Endothelial cell of umbilical vein (primary cell): ENCODE measurements at regions of chr19 and their contacts with region 1.

Region 1: DNA sequence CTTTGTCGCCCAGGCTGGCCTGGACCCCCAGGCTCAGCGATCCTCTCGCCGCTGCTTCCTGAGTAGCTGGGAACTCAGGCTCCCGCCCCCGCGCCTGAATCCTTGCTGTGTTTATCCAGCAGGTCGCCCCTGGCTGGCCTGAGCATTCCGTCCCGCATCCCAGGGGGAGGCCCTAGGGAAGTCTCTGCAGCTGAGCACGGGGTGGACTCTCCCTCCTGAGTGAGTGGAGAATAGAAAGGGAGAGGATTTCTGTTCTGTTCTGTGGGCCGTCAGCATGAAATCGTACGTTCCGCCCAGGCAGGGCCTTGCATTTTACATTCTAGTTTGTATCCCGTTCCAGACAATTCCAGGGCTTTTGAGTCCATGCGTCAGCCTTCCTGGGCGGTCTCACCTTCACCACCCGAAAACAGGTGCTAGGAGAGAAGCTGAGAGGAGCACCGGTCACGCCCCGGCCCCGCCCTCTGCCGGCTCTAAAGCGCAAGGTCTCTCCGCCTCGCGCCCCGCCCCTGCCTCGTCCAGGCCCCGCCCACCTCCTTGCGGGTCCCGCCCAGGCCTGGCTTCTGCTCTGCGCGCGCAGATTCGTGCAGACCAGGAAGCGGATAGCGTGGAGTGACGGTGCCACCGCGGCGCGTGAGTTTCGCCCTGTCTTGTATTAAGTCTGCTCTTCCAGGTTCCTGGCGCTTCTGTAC is at the start of gene ZNF761:
- DNase-seq: peak; percentile 96
- H3K4me3 ChIP-seq: peak within 1 kb of the TSS; percentile 74 to 98 (median 98)
- H3K27ac ChIP-seq: peak within 1 kb of the TSS; percentile 80
- H3K4me1 ChIP-seq: peaks cover 14% of the 10 kb centered on the region
- H3K27me3 ChIP-seq: no peaks in the 10 kb centered on the region
- CTCF ChIP-seq: peak in 1 of 2 donors; percentile 59
- POLR2A ChIP-seq: peak; percentile 83
- total RNA-seq, gene ZNF761: 7.3 and 8.8 TPM in 2 replicates

Region 2: DNA sequence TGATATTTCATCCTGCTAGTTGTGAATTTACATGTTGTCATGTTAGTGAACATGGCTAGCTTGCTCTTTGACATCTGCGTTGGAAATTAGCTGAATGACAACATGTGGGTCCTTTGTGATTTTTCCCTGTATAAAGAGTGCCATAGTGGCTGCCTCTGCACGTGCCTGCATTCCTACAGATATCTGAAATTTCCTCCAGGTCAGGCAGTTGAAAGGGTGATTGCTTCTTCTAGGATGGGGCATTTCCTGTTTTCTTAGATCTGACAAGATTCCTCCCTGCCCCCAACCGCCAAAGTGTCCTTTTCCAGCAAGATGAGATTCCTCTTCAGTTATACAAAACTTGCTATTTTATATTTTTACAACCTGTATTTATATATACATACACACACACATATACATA is 57.3 kb before region 1 on chr19:
- CTCF ChIA-PET with region 1: no interaction called
- POLR2A ChIA-PET with region 1: no interaction called
- dilution Hi-C with region 1: no loop called
- intact Hi-C with region 1: no loop called
- DNase-seq: no peak
- H3K4me3 ChIP-seq: no peak overlapping the region
- H3K27ac ChIP-seq: no peak overlapping the region
- H3K4me1 ChIP-seq: no peaks in the 10 kb centered on the region
- H3K27me3 ChIP-seq: no peaks in the 10 kb centered on the region
- CTCF ChIP-seq: no peak
- POLR2A ChIP-seq: no peak

Region 3: GRCh38 chr19:53467485-53468262 is 36.1 kb after region 1 on chr19 and contains the start of gene ZNF813:
- CTCF ChIA-PET with region 1: no interaction called
- POLR2A ChIA-PET with region 1: no interaction called
- dilution Hi-C with region 1: no loop called
- intact Hi-C with region 1: loop called (anchors 5 kb)
- DNase-seq: peak; percentile 89
- H3K4me3 ChIP-seq: peak within 1 kb of the TSS; percentile 68 to 86 (median 81)
- H3K27ac ChIP-seq: peak within 1 kb of the TSS; percentile 69
- H3K4me1 ChIP-seq: peaks cover 4% of the 10 kb centered on the region
- H3K27me3 ChIP-seq: no peaks in the 10 kb centered on the region
- CTCF ChIP-seq: no peak
- POLR2A ChIP-seq: peak; percentile 71
- total RNA-seq, gene ZNF813: 2.3 TPM in 2 replicates